SK-N-SH (cell line): ENCODE measurements at regions of chr11 and their contacts with region 1.

Region 1: GRCh38 chr11:39374963-39375698 is 2084.3 kb downstream of the LRRC4C start:
- DNase-seq: peak; percentile 20
- H3K4me3 ChIP-seq: peak overlapping the region in 1 of 2 experiments; percentile 34; a peak in 2 of 4 replicates
- H3K27ac ChIP-seq: no peak overlapping the region
- H3K4me1 ChIP-seq: peaks cover 0 to 6% of the 10 kb centered on the region in 2 experiments; a peak in 1 of 4 replicates
- H3K27me3 ChIP-seq: no peaks in the 10 kb centered on the region
- CTCF ChIP-seq: peak; percentile 84
- EP300 ChIP-seq: no peak
- RAD21 ChIP-seq: peak; percentile 35

Region 2: GRCh38 chr11:38384571-38384970 is 990.6 kb before region 1 on chr11:
- CTCF ChIA-PET with region 1: no interaction called
- POLR2A ChIA-PET with region 1: no interaction called
- DNase-seq: no peak
- H3K4me3 ChIP-seq: no peak overlapping the region
- H3K27ac ChIP-seq: no peak overlapping the region
- H3K4me1 ChIP-seq: no peaks in the 10 kb centered on the region
- H3K27me3 ChIP-seq: no peaks in the 10 kb centered on the region
- CTCF ChIP-seq: no peak
- EP300 ChIP-seq: no peak
- RAD21 ChIP-seq: no peak

Region 3: DNA sequence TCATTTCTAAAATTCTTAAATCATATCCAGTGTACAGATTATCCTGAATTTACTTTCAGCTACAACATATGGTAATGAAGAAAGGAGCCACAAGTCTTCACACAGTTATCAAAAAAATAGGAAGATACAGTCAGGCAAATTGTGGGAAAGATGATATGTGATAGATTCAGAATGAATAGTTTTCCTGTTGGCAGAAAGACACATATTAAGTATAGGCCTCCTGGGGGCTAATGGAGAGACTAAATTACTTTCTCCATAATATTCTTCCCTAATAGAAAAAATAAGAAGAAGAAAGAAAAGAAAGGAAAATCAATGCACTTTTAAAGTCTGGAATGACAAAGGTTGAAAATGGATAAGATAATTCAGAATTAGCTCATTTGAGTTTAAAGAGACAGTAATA is 10.8 kb after region 1 on chr11:
- CTCF ChIA-PET with region 1: interaction called, 13 read pairs
- POLR2A ChIA-PET with region 1: no interaction called
- DNase-seq: no peak
- H3K4me3 ChIP-seq: no peak overlapping the region
- H3K27ac ChIP-seq: no peak overlapping the region
- H3K4me1 ChIP-seq: no peaks in the 10 kb centered on the region; a peak in 1 of 4 replicates
- H3K27me3 ChIP-seq: no peaks in the 10 kb centered on the region
- CTCF ChIP-seq: no peak
- EP300 ChIP-seq: no peak
- RAD21 ChIP-seq: no peak